Activated CD4-positive, alpha-beta memory T cell treated with anti-CD3 and anti-CD28 coated beads for 36 hours (primary cell): ENCODE measurements at regions of chr18 and their contacts with region 1.

Region 1: DNA sequence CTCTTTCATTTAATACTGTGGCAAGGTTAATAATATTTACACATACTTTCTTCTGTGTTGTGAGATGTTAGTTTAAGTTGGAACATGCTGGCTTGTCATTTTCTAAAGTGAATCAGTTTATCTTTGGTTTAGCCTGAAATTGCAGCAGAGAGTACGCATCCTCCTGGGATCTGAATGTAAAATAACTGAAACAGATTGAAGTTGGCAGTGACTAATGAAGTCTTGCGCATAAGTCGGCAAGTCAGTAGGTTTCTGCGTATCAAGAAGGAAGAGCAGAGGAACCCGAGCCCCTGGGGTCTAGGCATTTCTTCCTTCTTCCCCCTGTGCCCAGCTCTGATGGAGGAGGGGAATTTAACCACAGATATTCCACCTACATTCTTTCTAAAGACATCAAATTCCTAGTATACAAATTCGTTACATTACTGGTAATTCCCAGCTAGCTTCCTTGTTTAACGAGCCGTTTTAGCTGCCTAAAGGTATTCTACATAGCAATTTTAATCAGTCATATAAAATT is 392.1 kb upstream of the RAB12 start:
- DNase-seq: no peak
- H3K4me3 Mint-ChIP-seq: no peak overlapping the region
- H3K27ac Mint-ChIP-seq: no peak overlapping the region
- H3K4me1 Mint-ChIP-seq: no peaks in the 10 kb centered on the region
- H3K27me3 Mint-ChIP-seq: no peaks in the 10 kb centered on the region

Region 2: GRCh38 chr18:7691206-7691605 is 525.9 kb before region 1 on chr18:
- CTCF ChIA-PET with region 1: no interaction called
- POLR2A ChIA-PET with region 1: no interaction called
- intact Hi-C with region 1: loop called (anchors 5 kb)
- DNase-seq: no peak
- H3K4me3 Mint-ChIP-seq: no peak overlapping the region
- H3K27ac Mint-ChIP-seq: no peak overlapping the region
- H3K4me1 Mint-ChIP-seq: no peaks in the 10 kb centered on the region
- H3K27me3 Mint-ChIP-seq: no peaks in the 10 kb centered on the region

Region 3: DNA sequence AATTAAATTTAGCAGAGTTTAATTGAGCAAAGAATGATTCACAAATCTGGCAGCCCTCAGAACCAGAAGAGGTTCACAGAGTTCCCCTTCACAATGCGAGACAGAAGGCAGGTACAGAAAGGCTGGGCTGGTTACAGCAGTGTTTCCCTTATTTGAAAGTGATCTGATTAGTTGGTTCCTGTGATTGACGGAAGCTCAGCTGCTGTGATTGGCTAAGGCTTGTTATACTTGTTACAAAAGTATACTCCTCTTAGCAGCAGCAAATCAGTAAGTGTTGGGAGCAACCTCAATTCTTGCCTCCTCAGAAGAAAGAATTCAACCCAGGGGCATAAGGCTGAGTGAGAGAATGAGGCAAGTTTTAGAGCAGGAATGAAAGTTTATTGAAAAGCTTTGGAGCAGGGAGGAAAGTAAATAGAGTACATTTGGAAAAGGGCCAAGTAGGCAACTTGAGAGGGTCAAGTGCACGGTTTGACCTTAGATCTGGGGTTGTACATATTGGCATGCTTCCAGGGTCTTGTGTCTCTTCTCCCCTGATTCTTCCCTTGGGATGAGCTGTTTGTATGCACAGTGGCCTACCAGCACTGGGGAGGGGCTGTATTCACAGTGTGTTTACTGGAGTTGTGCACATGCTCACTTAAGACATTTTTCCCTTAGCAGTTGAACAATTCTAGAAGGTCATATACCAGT is 39.6 kb before region 1 on chr18:
- CTCF ChIA-PET with region 1: no interaction called
- POLR2A ChIA-PET with region 1: no interaction called
- intact Hi-C with region 1: no loop called
- DNase-seq: no peak
- H3K4me3 Mint-ChIP-seq: no peak overlapping the region
- H3K27ac Mint-ChIP-seq: no peak overlapping the region
- H3K4me1 Mint-ChIP-seq: no peaks in the 10 kb centered on the region
- H3K27me3 Mint-ChIP-seq: no peaks in the 10 kb centered on the region